ENCODE measurements at regions of chr20 and their contacts with region 1.

Region 1: DNA sequence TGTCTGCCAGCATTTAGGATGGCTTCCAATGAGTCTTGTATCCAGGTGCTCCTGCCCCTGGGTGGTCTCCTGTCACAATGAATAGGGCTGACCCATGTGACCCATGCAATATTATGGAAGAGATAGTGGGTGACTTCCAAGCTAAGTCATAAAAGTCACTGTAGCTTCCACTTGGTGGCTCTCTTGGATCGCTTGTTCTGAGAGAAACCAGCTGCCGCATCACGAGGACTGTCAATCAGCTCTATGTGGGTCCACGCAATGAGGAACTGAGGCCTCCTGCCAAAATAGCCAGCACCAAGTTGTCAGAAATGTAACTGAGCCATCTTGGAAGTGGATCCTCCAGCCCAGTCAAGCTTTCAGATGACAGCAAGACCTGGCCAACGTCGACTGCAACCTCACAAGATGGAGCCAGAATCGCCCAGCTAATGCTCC is 14.9 kb upstream of the MATN4 start:
- DNase-seq: no peak
- H3K4me3 ChIP-seq: no peak overlapping the region
- H3K27ac ChIP-seq: no peak overlapping the region
- H3K4me1 ChIP-seq: no peaks in the 10 kb centered on the region; a peak in 1 of 7 replicates
- H3K27me3 ChIP-seq: no peaks in the 10 kb centered on the region
- CTCF ChIP-seq: peak in 2 of 3 experiments; percentile 42 to 54; a peak in 3 of 4 replicates
- EP300 ChIP-seq: no peak
- POLR2A ChIP-seq: no peak
- RAD21 ChIP-seq: peak; percentile 73 to 82

Region 2: GRCh38 chr20:45211569-45212474 is 111.1 kb before region 1 on chr20:
- CTCF ChIA-PET with region 1: no interaction called
- POLR2A ChIA-PET with region 1: no interaction called
- DNase-seq: no peak
- H3K4me3 ChIP-seq: no peak overlapping the region
- H3K27ac ChIP-seq: no peak overlapping the region
- H3K4me1 ChIP-seq: peaks cover 3 to 18% (median 11%) of the 10 kb centered on the region in 4 experiments; a peak in 6 of 7 replicates
- H3K27me3 ChIP-seq: peaks cover 0 to 1% (median 0%) of the 10 kb centered on the region in 4 experiments; a peak in 2 of 7 replicates
- CTCF ChIP-seq: no peak
- EP300 ChIP-seq: no peak
- POLR2A ChIP-seq: no peak
- RAD21 ChIP-seq: no peak

Region 3: GRCh38 chr20:45257711-45258110 is 65.3 kb before region 1 on chr20:
- CTCF ChIA-PET with region 1: no interaction called
- POLR2A ChIA-PET with region 1: no interaction called
- DNase-seq: no peak
- H3K4me3 ChIP-seq: no peak overlapping the region
- H3K27ac ChIP-seq: no peak overlapping the region
- H3K4me1 ChIP-seq: peaks cover 0 to 6% (median 3%) of the 10 kb centered on the region in 4 experiments; a peak in 5 of 7 replicates
- H3K27me3 ChIP-seq: no peaks in the 10 kb centered on the region; a peak in 1 of 7 replicates
- CTCF ChIP-seq: no peak
- EP300 ChIP-seq: no peak
- POLR2A ChIP-seq: no peak
- RAD21 ChIP-seq: no peak

Region 4: DNA sequence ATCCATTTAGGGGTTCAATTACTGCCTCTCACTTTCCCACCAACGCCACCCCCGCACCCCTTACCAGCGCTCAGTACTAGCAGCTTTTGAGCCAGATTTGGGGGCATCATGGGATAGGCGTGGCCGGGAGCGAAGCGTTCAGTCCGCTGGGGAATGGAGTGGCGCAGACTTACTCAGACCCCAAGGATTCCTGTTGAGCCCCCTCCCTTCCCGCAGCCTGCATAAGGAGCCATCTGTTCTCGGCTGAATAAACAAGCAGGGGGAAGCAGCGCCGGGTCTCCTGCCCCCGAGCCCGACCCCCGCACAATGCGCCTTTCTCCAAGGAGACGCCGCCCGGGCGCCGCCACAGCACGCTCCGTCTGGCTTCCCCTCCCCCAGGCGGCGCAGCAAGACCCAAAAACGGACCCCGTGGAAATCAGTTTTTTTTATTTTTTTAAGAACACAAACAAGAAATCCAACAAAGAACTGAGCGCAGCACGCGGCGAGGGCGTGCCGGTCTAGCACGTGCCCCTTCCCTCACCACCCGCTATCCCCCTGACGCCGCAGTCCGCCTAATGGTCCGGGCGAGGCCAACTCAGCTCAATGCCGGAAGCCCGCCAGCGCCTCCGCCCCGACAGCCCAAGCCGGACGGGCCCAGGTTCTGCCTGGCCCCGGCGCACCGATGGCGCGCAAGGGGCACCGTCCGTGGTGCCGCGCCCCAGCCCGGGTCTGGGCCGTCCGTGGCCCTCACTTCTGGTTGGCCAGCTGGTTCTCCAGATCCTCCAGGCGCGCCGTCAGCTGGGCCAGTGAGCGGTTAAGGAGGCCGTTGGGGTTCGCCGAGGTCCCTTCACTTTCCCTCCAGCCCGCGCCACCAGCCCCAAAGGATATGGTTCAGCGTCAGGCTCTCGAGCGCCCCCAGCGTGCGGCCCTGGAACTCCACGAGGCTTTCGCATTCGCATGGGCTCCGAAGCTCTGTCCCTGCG is 29.6 kb before region 1 on chr20:
- CTCF ChIA-PET with region 1: interaction called, 10 read pairs
- POLR2A ChIA-PET with region 1: no interaction called
- DNase-seq: peak; percentile 64 to 99
- H3K4me3 ChIP-seq: peak overlapping the region; percentile 35 to 63 (median 54)
- H3K27ac ChIP-seq: no peak overlapping the region
- H3K4me1 ChIP-seq: peaks cover 0 to 3% (median 0%) of the 10 kb centered on the region in 4 experiments; a peak in 3 of 7 replicates
- H3K27me3 ChIP-seq: peaks cover 0 to 20% (median 11%) of the 10 kb centered on the region in 4 experiments; a peak in 6 of 7 replicates
- CTCF ChIP-seq: peak; percentile 88 to 96 (median 89)
- EP300 ChIP-seq: no peak
- POLR2A ChIP-seq: peak in 1 of 2 experiments; percentile 76; a peak in 2 of 3 replicates
- RAD21 ChIP-seq: peak; percentile 37 to 50

Region 5: GRCh38 chr20:45336530-45337366 is 13.8 kb after region 1 on chr20:
- CTCF ChIA-PET with region 1: interaction called, 44 read pairs
- POLR2A ChIA-PET with region 1: interaction called, 15 read pairs
- DNase-seq: no peak
- H3K4me3 ChIP-seq: no peak overlapping the region
- H3K27ac ChIP-seq: peak overlapping the region; percentile 59; the same call in 1 of the 2 replicates
- H3K4me1 ChIP-seq: peaks cover 11 to 38% (median 23%) of the 10 kb centered on the region in 4 experiments
- H3K27me3 ChIP-seq: no peaks in the 10 kb centered on the region
- CTCF ChIP-seq: no peak
- EP300 ChIP-seq: no peak
- POLR2A ChIP-seq: no peak
- RAD21 ChIP-seq: no peak

Region 6: DNA sequence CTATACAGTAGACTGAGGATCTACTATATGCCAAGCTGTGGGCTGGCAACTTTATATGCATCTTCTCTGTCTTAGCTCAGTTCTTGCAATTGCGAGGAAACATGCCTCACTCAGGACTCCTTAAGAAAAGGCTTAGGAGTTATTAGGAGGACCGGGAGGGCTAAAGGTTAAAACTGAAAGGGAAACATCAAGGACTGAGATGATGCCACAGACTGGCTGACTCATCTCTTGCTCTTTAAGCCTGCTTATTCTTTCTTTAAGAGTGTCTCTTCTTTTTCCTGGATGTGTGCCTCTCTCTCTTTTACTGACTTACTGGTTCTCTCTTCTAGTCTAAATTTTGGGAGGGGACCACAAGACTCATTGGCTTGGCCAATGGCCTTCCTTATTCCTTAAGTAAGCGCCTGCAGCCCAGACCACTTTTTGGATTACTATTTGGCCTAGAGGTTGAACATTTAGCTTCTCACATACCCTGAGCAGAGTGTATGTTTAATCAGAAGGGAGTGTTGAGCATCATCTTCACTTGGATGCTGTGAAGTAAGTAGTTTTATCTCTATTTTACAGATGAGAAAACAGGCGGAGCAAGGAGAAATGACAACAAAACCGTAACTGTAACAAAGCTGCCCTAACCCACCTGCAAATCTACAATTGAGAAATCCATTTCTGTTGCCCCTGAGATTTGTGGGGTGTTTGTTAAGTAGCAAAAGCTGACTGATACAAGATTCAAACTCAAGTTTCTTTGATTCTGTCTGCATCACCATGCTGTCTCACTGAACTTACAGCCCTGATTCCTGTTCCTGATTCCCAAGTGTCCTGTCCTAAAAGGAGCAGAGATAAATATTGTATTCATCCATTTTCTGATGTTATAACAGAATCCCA is 32.5 kb after region 1 on chr20:
- CTCF ChIA-PET with region 1: interaction called, 29 read pairs
- POLR2A ChIA-PET with region 1: interaction called, 3 read pairs
- DNase-seq: no peak
- H3K4me3 ChIP-seq: no peak overlapping the region
- H3K27ac ChIP-seq: no peak overlapping the region
- H3K4me1 ChIP-seq: peaks cover 0 to 11% (median 5%) of the 10 kb centered on the region in 4 experiments; a peak in 4 of 7 replicates
- H3K27me3 ChIP-seq: no peaks in the 10 kb centered on the region
- CTCF ChIP-seq: no peak
- EP300 ChIP-seq: no peak
- POLR2A ChIP-seq: no peak
- RAD21 ChIP-seq: no peak

Region 7: GRCh38 chr20:45436732-45437391 is 113.9 kb after region 1 on chr20:
- CTCF ChIA-PET with region 1: interaction called, 129 read pairs
- POLR2A ChIA-PET with region 1: interaction called, 9 read pairs
- DNase-seq: peak in 1 of 2 experiments; percentile 97
- H3K4me3 ChIP-seq: peak overlapping the region; percentile 17 to 72 (median 61); a peak in 7 of 8 replicates
- H3K27ac ChIP-seq: no peak overlapping the region
- H3K4me1 ChIP-seq: no peaks in the 10 kb centered on the region
- H3K27me3 ChIP-seq: no peaks in the 10 kb centered on the region
- CTCF ChIP-seq: peak; percentile 93 to 97 (median 95)
- EP300 ChIP-seq: no peak
- POLR2A ChIP-seq: no peak
- RAD21 ChIP-seq: peak; percentile 91 to 95

Region 8: GRCh38 chr20:45470262-45470931 is 147.4 kb after region 1 on chr20:
- CTCF ChIA-PET with region 1: interaction called, 13 read pairs
- POLR2A ChIA-PET with region 1: no interaction called
- DNase-seq: peak in 1 of 2 experiments; percentile 87
- H3K4me3 ChIP-seq: peak overlapping the region; percentile 63 to 77 (median 70)
- H3K27ac ChIP-seq: peak overlapping the region; percentile 36; the same call in 1 of the 2 replicates
- H3K4me1 ChIP-seq: peaks cover 2 to 20% (median 7%) of the 10 kb centered on the region in 4 experiments
- H3K27me3 ChIP-seq: peaks cover 0 to 4% (median 1%) of the 10 kb centered on the region in 4 experiments; a peak in 3 of 7 replicates
- CTCF ChIP-seq: no peak
- EP300 ChIP-seq: no peak
- POLR2A ChIP-seq: peak in 1 of 2 experiments; percentile 67; a peak in 1 of 3 replicates
- RAD21 ChIP-seq: no peak